PC-9 (cell line): ENCODE measurements at regions of chr16 and their contacts with region 1.

Region 1: DNA sequence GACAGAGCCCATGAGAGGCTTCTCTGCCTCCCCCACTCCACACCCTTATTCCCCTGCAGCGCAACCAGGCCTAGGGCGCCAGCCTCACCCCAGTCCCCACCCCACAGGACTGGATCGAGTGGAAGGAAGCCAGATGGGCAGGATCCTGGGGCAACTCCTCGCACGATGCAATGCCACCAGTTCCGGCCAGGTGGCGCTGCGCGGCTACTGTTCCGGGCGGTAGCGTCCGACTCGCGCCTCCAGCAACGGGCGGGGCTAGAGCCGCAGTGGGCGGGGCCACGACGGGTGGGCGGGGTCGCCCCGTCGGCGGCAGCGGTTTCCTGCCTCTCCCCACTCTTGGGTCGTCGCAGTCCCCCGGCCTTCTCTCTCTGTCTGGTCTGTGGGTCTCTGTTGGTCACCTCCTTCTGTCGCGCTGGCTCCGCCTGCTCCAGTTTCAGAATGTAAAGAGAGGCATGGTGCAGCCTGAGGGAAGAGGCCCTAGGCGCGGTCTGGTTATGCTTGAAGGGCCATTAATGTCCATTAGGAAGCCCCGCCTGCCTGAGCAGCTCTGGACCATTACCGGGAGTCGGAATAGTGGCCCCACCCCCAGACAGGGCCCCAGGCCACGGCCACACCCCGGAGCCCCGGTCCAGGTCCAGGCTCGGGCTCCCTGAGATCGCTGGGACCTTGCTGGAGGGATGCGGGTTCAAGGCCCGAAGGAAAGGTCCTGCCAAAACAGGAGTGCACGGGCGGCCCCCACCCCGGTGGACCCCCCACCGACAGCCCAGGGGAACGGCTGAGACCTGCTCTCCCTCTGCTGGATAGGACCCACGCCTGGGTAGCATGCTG is 3.4 kb upstream of the NHERF2 start:
- DNase-seq: peak; percentile 61 to 97
- H3K4me3 ChIP-seq: peak overlapping the region; percentile 52; the same call in 1 of the 2 replicates
- H3K27ac ChIP-seq: no peak overlapping the region
- H3K4me1 ChIP-seq: peaks cover 16% of the 10 kb centered on the region
- H3K27me3 ChIP-seq: no peaks in the 10 kb centered on the region
- CTCF ChIP-seq: peak; percentile 96

Region 2: DNA sequence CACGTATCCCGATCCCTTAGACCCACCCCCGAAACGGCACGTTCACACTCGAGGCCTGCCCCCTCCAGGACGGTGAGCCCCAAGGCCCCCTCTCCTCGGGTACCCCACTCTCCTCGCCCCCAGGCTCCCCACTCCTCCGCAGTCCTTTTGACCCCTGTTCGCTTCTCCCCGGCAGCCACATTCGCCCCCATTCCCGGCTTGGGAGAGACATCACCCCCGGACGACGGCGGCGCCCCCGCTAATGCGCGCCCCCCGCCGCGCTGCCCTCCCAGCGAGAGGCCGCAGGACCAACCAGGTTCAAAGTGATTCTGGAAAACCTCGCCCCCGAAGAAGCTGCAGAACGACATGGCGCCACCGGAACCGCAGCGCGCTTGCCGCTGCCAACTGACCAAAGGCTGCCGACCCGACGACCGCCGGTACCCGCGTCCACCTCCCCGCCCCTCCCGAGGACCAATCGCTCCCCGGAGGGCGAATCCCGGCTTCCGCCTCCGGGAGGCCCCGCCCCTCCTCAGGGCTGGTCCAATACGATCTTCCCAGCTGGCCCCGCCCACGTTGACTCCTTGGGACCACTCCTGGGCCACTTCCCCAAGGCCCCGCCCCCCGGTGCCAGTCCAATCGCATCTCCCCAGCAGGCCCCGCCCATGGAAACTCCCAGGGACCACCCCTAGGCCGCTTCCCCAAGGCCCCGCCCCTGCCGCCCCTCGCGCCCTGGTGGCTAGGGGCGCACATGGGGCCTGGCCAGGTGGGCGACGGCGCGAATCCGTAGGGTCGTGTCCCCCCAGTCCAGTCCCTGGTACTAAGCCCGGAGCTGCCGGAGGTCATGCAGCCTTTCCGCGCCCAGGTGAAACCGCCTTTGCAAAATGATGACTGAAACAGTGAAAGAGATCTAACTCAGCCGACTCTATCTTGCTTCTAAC is 80.2 kb before region 1 on chr16 and contains the start of gene MSRB1:
- CTCF ChIA-PET with region 1: no interaction called
- POLR2A ChIA-PET with region 1: no interaction called
- intact Hi-C with region 1: no loop called
- DNase-seq: peak; percentile 93 to 100
- H3K4me3 ChIP-seq: peak within 1 kb of the TSS; percentile 81
- H3K27ac ChIP-seq: peak within 1 kb of the TSS; percentile 61
- H3K4me1 ChIP-seq: peaks cover 18% of the 10 kb centered on the region
- H3K27me3 ChIP-seq: no peaks in the 10 kb centered on the region
- CTCF ChIP-seq: no peak
- total RNA-seq, gene MSRB1: 49.4 and 54.9 TPM in 2 replicates

Region 3: DNA sequence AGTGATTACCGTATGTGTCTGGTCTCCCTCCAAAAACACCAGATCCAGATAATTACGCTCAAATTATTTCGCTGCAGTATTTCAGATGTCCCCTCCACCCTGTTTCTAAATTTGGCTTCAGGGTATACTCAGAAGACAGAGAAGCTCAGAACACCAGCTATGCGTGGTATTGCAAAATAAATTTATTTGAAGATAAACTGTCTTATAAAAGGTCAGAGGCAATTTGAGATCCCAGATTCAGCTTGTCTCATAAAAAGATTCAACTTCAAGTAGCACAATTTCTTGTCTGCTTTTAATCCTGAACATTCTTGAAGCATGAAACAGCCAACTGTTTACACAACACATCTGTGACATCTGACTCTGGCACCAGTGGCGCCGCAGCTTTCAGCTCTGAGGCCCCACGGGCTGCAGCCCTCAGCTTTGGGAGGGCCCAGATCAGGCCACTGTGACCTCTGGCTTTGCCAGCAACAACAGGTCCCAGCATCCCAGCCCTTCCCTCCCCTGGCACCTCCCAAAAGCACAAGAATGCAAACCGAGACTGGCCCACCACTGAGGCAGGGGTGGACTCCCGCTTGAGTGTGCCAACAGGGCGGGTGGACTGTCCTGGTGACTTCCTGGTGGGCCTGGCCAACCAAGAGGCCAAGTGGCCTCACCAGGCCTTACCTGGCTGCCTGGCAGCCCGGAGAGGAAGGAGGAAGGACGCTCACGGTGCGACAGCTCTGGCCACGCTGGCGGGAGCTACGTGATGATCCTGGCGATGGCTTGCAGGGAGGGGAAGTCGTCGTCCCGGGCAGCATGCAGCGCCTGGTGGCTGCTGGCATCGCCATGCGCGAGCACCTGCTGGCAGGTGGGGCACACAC is 25.6 kb before region 1 on chr16:
- CTCF ChIA-PET with region 1: no interaction called
- POLR2A ChIA-PET with region 1: no interaction called
- intact Hi-C with region 1: no loop called
- DNase-seq: no peak
- H3K4me3 ChIP-seq: no peak overlapping the region
- H3K27ac ChIP-seq: no peak overlapping the region
- H3K4me1 ChIP-seq: peaks cover 20% of the 10 kb centered on the region
- H3K27me3 ChIP-seq: no peaks in the 10 kb centered on the region
- CTCF ChIP-seq: no peak

Region 4: GRCh38 chr16:2009789-2010510 is 13.4 kb before region 1 on chr16 and contains the start of gene ZNF598:
- CTCF ChIA-PET with region 1: interaction called, 15 read pairs
- POLR2A ChIA-PET with region 1: no interaction called
- intact Hi-C with region 1: no loop called
- DNase-seq: peak; percentile 52 to 82
- H3K4me3 ChIP-seq: peak within 1 kb of the TSS; percentile 88
- H3K27ac ChIP-seq: peak within 1 kb of the TSS; percentile 86
- H3K4me1 ChIP-seq: peaks cover 27% of the 10 kb centered on the region
- H3K27me3 ChIP-seq: no peaks in the 10 kb centered on the region
- CTCF ChIP-seq: no peak
- total RNA-seq, gene ZNF598: 68.4 and 72.5 TPM in 2 replicates

Region 5: GRCh38 chr16:2040787-2041522 is 17.6 kb after region 1 on chr16:
- CTCF ChIA-PET with region 1: interaction called, 12 read pairs
- POLR2A ChIA-PET with region 1: interaction called, 3 read pairs
- intact Hi-C with region 1: loop called (anchors 1 kb)
- DNase-seq: peak; percentile 94 to 96
- H3K4me3 ChIP-seq: no peak overlapping the region
- H3K27ac ChIP-seq: peak overlapping the region; percentile 95
- H3K4me1 ChIP-seq: peaks cover 45% of the 10 kb centered on the region
- H3K27me3 ChIP-seq: no peaks in the 10 kb centered on the region
- CTCF ChIP-seq: no peak

Region 6: DNA sequence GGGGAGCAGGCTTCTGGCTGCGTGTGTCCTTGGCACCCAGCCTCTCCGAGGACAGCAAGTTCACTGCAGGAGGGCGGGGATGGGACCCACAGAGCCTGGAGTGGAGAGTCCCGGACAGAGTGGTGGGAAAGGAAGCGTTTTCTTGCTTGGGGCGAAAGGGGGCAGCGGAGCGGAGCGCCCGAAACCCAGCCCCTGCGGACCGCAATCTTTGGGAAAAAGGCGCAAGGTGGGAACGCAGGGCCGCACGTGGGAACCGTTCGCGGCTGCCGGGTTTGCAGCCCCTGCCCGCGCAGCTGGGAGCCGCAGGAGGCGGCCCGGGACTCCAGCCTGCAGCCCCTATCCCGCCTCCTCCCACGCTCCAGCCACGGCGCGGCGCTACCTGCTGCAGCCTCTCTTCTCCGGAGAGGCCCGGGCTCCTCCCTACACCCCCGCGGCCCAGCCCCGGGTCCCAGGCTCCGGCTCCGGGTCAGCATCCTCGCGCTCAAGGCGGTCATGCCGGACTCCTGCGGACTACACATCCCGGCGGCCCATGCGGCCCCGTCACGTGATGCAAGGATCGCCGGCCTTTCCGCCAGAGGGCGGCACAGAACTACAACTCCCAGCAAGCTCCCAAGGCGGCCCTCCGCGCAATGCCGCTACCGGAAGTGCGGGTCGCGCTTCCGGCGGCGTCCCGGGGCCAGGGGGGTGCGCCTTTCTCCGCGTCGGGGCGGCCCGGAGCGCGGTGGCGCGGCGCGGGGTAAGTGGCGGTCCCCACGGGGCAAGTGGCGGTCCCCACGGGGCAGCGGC is 24.2 kb after region 1 on chr16 and contains the starts of genes NTHL1 and TSC2:
- CTCF ChIA-PET with region 1: interaction called, 10 read pairs
- POLR2A ChIA-PET with region 1: interaction called, 12 read pairs
- intact Hi-C with region 1: loop called (anchors 1 kb)
- DNase-seq: peak; percentile 89 to 98
- H3K4me3 ChIP-seq: peak within 1 kb of the TSS; percentile 88
- H3K27ac ChIP-seq: no peak within 1 kb of the TSS
- H3K4me1 ChIP-seq: peaks cover 29% of the 10 kb centered on the region
- H3K27me3 ChIP-seq: no peaks in the 10 kb centered on the region
- CTCF ChIP-seq: peak; percentile 55
- total RNA-seq, gene NTHL1: 47.3 and 66.6 TPM in 2 replicates
- total RNA-seq, gene TSC2: 166 and 170 TPM in 2 replicates

Region 7: DNA sequence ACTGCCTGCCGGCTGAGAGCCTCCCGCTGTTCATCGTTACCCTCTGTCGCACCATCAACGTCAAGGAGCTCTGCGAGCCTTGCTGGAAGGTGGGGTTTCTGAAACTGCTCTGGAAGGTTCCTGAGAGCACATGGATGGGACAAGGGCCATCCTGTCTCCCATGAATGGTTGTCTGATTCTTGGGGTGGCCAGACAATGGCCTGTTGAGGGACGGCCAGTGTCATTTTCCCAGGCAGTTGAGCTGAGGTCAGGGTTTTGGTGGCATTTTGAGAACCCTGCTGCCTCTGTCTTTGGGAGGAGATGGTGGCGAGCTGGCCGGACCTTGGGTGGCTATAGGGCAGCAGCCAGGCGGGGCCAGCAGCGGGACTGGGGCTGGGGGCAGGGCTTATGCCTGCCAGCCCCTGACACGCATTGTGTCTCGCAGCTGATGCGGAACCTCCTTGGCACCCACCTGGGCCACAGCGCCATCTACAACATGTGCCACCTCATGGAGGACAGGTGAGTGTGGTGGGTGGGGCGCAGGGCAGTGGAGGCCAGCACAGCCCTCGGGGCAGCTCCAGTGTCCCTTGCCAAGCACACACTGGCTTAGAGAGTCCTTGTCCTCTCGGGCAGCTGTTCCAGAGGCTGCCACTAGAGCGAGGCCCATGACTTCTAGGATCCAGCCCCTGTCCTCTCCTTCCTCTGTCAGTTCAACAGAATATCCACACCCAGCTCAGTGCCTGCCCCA is 33.5 kb after region 1 on chr16:
- CTCF ChIA-PET with region 1: no interaction called
- POLR2A ChIA-PET with region 1: no interaction called
- intact Hi-C with region 1: loop called (anchors 2 kb)
- DNase-seq: no peak
- H3K4me3 ChIP-seq: no peak overlapping the region
- H3K27ac ChIP-seq: no peak overlapping the region
- H3K4me1 ChIP-seq: no peaks in the 10 kb centered on the region
- H3K27me3 ChIP-seq: no peaks in the 10 kb centered on the region
- CTCF ChIP-seq: peak; percentile 30; the same call in 1 of the 2 replicates

Region 8: GRCh38 chr16:2090777-2091546 is 67.7 kb after region 1 on chr16:
- CTCF ChIA-PET with region 1: interaction called, 3 read pairs
- POLR2A ChIA-PET with region 1: no interaction called
- intact Hi-C with region 1: loop called (anchors 2 kb)
- DNase-seq: peak; percentile 62 to 98
- H3K4me3 ChIP-seq: peak overlapping the region; percentile 45; the same call in 1 of the 2 replicates
- H3K27ac ChIP-seq: no peak overlapping the region
- H3K4me1 ChIP-seq: no peaks in the 10 kb centered on the region; the same call in 1 of the 2 replicates
- H3K27me3 ChIP-seq: no peaks in the 10 kb centered on the region
- CTCF ChIP-seq: peak; percentile 55; the same call in 1 of the 2 replicates

Region 9: DNA sequence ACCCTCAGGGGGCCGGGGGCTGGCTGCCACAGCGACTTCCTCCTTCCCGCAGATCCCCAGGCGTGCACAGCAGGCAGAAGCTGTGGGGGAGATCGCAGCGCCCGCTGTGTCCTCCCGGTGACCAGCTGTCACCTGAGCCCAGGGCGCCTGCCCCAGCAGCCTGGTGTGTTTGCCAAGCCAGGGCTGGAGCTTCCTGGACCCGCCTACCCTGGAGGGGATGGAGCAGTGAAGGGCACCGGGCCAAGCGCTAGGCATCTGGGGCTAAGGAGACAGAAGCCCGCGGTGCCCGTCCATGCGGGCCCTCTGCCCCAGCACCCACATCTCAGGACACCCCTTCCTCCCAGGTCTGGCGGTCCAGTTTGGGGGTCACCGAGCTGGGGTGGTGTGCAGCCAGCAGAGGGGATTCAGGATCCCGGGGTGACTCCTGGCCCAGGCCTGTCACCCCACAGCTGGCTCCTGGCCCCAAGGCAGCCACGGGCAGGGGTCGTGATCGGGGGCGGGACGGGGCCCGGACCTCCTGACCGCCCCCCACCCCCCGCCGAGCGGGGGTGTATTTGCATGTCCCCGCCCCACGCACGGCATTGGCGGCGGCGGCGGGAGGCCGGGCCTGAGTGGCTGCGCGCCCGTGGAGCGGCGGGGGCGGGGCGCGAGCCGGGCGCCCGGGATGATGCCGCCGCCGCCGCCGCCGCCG is 124.8 kb after region 1 on chr16 and contains the start of gene RAB26:
- CTCF ChIA-PET with region 1: interaction called, 4 read pairs
- POLR2A ChIA-PET with region 1: interaction called, 4 read pairs
- intact Hi-C with region 1: loop called (anchors 2 kb)
- DNase-seq: peak; percentile 91 to 98
- H3K4me3 ChIP-seq: peak within 1 kb of the TSS; percentile 68
- H3K27ac ChIP-seq: peak within 1 kb of the TSS; percentile 37; the same call in 1 of the 2 replicates
- H3K4me1 ChIP-seq: peaks cover 34% of the 10 kb centered on the region
- H3K27me3 ChIP-seq: no peaks in the 10 kb centered on the region
- CTCF ChIP-seq: no peak
- total RNA-seq, gene RAB26: 29.5 and 31.3 TPM in 2 replicates